ENCODE measurements at regions of chr2 and their contacts with region 1.

Region 1: DNA sequence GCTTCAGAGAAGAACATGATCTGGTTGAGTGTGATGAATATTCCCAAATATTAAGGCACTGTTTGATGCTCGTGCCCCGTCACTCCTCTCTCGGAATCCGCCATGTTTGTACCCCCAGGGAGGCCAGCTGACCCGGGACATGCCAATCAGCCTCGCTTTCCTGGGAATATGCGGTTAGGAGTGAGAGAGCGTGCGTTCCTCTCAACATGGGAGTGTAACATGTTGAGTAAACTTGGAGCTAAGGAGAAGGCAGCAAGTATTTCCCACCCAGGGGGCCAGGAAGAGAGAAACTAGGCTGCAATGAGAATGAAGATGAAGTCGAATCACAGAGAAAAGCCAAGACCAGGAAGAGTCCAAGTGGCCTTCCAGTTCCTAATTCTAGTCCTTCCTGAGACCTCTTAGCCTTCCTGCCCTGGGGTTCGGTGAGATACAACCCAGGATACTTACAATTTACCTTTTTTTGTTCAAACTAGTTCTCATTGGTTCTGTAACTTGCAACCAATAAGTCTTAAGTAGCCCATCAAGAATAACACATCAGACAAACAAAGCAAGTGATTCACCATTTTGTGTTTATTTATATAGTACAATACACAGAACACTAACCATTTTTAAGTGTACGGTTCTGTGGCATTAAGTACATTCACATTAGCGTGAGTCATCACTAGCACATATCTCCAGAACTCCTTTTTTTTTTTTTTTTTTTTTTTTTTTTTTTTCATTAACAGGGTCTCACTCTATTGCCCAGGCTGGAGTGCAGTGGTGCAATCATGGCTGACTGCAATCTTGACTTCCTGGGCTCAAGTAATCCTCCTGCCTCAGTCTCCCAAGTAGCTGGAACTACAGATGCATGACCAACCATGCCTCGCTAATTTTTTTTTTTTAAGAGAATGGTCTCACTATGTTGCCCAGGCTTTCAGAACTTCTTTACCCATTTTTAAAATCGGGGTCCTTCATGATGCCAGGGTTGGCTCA is 36.4 kb upstream of the SLC1A4 start:
- DNase-seq: peak in 1 of 2 experiments; percentile 78
- H3K4me3 ChIP-seq: no peak overlapping the region
- H3K27ac ChIP-seq: no peak overlapping the region
- H3K4me1 ChIP-seq: 0 out of 2 replicates have a peak, but pooled peaks cover 6% of the 10 kb centered on the region
- H3K27me3 ChIP-seq: 0 out of 2 replicates have a peak, but pooled peaks cover 6% of the 10 kb centered on the region
- CTCF ChIP-seq: no peak

Region 2: DNA sequence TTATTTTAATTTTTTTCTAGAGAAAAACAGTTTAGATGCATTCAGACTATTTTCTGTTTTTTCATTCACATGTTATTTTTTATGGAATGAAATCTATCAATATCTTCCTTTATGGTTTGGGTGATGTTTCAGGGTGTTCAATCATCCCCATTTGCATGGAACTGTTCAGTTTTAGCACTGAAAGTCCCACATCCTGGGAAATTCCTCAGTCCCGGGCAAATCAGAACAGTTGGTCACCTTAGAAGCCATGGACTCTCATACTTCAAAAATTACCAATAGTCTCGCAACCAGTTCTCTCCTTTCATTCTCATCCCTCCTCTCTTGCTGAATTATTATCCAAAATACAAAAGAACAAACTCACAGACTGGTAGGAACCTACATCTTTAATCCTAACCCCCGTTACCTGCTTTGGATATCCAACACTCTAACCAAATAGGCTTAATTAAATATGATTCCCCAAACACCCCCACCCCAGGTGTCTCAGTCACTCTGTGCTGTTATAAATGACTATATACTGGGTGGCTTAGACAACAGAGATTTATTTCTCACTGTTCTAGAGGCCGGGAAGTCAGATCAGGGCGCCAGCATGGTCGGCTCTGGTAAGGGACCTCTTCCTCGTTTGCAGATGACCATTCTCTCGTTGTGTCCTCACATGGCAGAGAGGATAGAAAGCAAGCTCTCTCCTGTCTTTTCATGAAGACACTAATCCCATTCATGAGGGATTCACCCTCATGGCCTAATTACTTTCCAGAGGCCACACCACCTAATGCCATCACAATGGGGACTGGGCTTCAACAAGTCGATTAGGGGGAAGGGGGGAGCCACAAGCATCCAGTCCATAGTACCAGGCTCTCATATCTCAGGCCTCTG is 21.3 kb before region 1 on chr2:
- CTCF ChIA-PET with region 1: no interaction called
- POLR2A ChIA-PET with region 1: interaction called, 12 read pairs
- intact Hi-C with region 1: no loop called
- DNase-seq: no peak
- H3K4me3 ChIP-seq: no peak overlapping the region
- H3K27ac ChIP-seq: no peak overlapping the region
- H3K4me1 ChIP-seq: no peaks in the 10 kb centered on the region
- H3K27me3 ChIP-seq: peaks cover 34% of the 10 kb centered on the region
- CTCF ChIP-seq: no peak

Region 3: GRCh38 chr2:64937687-64938491 is 14.9 kb before region 1 on chr2:
- CTCF ChIA-PET with region 1: no interaction called
- POLR2A ChIA-PET with region 1: interaction called, 16 read pairs
- intact Hi-C with region 1: no loop called
- DNase-seq: no peak
- H3K4me3 ChIP-seq: no peak overlapping the region
- H3K27ac ChIP-seq: no peak overlapping the region
- H3K4me1 ChIP-seq: no peaks in the 10 kb centered on the region
- H3K27me3 ChIP-seq: no peaks in the 10 kb centered on the region
- CTCF ChIP-seq: no peak

Region 4: DNA sequence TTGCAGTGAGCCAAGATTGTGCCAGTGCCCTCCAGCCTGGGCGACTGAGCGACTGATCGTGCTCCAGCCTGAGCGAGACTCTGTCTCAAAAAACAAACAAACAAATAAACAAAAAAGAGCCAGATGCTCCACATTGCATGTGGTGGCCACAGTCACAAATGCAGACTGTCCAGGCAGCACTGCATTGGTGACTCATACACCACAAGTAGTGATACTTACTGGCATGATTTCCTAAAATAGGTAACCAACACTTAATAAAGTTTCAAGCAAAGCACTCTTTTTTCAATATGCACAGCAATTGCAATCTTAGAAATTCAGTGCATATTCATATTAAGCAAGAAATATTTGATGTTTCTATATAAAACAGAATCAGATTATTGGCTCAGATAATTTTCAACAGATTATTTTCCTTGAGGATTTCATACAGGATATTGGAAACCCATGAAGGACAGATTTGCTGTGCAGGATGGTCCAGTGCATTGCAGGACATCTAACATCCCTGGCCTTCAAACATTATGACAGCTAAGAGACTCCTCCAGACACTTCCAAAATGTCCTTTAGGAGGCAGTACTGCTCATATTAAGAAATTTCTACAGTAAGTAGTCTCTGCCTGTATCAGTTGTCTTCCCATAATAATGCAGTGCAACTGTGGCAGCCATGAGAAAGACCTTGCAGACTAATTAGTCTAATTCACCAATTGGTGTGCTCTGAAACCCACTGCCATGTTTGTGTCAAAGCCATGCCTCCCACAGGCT is 25.9 kb after region 1 on chr2:
- CTCF ChIA-PET with region 1: interaction called, 14 read pairs
- POLR2A ChIA-PET with region 1: no interaction called
- intact Hi-C with region 1: no loop called
- DNase-seq: no peak
- H3K4me3 ChIP-seq: no peak overlapping the region
- H3K27ac ChIP-seq: no peak overlapping the region
- H3K4me1 ChIP-seq: peaks cover 16% of the 10 kb centered on the region
- H3K27me3 ChIP-seq: no peaks in the 10 kb centered on the region
- CTCF ChIP-seq: no peak

Measured in PC-9 (cell line).